ENCODE measurements at regions of chr12 and their contacts with region 1.

Region 1: DNA sequence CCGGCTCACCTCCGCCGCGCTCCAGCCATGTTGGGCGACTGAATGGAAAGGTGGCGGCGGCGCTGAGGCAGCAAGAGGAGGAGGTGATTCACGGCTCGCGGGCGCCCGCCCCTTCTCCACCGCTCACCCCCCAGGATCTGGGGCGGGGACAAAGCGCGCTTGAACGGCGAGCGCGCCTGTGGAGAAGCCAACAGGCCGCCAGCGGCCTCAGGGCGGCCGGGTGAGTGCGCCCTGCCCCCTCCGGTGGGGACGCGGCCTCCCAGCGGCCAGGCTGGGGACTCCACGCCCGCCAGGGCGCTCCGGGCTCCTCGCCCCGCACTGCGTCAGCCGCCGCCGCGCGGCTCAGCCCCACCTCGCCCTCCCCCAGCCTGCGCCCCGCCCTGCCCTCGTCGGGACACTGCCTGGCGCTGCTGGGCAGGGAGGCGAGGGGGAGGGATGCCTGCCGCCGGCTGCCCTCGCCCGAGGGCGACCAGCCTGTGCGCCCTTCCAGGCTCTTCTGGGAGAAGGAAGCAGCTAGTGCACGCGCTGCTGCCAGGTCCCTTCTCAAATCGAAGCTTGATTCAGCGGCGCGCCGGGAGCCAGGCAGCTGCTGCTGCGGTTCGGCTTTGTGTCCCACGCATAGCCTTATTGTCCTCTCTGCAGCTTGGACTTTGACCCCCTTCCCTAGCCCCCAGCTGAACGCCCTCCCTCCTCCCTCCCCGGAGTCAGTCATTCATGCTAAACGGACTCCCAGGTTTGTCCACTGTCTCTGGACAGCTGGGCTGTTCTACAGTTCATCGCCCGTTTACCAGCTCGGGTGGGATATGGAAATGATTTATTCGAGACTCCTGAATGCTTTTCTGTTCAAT is at the start of gene KIF21A:
- DNase-seq: peak; percentile 95
- H3K4me3 ChIP-seq: peak within 1 kb of the TSS; percentile 77 to 92 (median 80)
- H3K27ac ChIP-seq: peak within 1 kb of the TSS; percentile 77
- H3K4me1 ChIP-seq: peaks cover 19% of the 10 kb centered on the region
- H3K27me3 ChIP-seq: no peaks in the 10 kb centered on the region
- CTCF ChIP-seq: peak; percentile 35 to 66
- total RNA-seq, gene KIF21A: 43.0 to 45.3 TPM

Region 2: DNA sequence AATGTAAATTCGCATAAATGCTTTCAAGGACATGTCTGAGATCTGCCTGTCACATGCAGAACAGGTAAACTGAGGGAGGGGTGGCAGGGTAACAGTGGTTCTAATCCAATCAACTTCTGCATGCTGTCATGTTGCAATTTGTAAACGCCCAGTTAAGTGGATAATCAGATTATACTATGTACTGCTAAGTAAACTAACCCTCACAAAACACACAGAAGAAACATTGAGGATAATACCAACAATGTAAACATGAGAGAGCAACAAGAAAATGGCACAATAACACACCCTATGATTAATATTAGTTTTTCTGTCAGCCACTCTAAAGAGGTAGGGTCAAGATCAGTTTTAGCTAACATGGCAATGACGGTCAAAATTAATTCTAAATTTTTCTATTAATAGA is 124.1 kb before region 1 on chr12:
- CTCF ChIA-PET with region 1: no interaction called
- dilution Hi-C with region 1: no loop called
- in situ Hi-C with region 1: no loop called
- intact Hi-C with region 1: loop called (anchors 5 kb)
- DNase-seq: no peak
- H3K4me3 ChIP-seq: no peak overlapping the region
- H3K27ac ChIP-seq: no peak overlapping the region
- H3K4me1 ChIP-seq: no peaks in the 10 kb centered on the region
- H3K27me3 ChIP-seq: no peaks in the 10 kb centered on the region
- CTCF ChIP-seq: no peak

Region 3: DNA sequence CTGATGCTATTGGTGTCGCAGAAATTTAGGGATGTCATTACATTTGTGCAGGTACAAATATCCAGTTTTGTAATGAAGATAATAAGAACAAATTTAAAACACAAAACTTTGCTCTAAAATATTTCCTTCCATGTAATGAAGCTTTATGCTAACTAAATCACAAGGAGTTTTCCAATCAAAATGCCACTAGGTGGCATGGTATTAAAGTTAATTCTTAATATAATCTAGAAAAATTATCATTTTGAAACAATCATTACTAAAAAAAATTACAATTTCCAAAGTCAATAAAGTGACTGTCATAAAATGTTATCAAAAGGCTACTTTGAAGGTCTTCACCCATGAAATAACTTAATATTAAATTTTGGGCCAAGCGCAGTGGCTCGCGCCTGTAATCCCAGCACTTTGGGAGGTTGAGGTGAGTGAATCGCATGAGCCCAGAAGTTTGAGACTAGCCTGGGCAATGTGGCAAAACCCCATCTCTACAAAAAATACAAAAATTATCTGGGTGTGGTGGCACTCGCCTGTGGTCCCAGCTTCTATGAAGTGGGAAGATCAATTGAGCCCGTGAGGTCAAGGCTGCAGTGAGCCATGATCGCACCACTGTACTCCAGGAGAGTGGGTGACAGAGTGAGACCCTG is 77.8 kb before region 1 on chr12:
- CTCF ChIA-PET with region 1: interaction called, 3 read pairs
- dilution Hi-C with region 1: no loop called
- in situ Hi-C with region 1: no loop called
- intact Hi-C with region 1: loop called (anchors 1 kb)
- DNase-seq: no peak
- H3K4me3 ChIP-seq: no peak overlapping the region
- H3K27ac ChIP-seq: no peak overlapping the region
- H3K4me1 ChIP-seq: no peaks in the 10 kb centered on the region
- H3K27me3 ChIP-seq: no peaks in the 10 kb centered on the region
- CTCF ChIP-seq: peak in 1 of 2 donors; percentile 33

Region 4: DNA sequence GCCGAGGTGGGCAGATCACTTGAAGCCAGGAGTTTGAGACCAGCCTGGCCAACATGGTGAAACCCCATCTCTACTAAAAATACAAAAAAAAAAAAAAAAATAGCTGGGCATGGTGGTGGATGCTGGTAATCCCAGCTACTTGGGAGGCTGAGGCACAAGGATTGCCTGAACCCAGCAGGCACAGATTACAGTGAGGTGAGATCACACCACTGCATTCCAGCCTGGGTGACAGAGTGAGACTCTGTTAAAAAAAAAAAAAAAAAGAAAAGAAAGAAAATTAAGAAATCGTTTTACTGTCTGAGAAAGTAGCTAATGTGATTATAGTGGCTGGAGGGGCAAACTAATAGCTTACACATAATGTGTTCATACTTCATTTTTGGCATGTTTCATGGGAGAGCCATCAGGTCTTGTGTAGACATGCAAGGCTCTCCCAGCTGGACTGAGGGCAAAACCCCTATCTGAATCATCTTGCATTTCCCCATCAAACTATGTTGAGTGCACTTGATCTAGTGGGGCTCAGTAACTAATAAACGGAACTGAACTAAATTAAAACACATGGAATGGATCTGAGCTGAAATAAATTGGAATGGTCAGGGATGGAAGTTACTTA is 16.6 kb before region 1 on chr12:
- CTCF ChIA-PET with region 1: interaction called, 3 read pairs
- dilution Hi-C with region 1: no loop called
- in situ Hi-C with region 1: no loop called
- intact Hi-C with region 1: loop called (anchors 1 kb)
- DNase-seq: peak; percentile 98
- H3K4me3 ChIP-seq: no peak overlapping the region
- H3K27ac ChIP-seq: peak overlapping the region; percentile 70
- H3K4me1 ChIP-seq: peaks cover 16% of the 10 kb centered on the region
- H3K27me3 ChIP-seq: no peaks in the 10 kb centered on the region
- CTCF ChIP-seq: no peak

Region 5: GRCh38 chr12:39490500-39491276 is 47.4 kb after region 1 on chr12:
- CTCF ChIA-PET with region 1: no interaction called
- dilution Hi-C with region 1: no loop called
- in situ Hi-C with region 1: no loop called
- intact Hi-C with region 1: loop called (anchors 2 kb)
- DNase-seq: peak; percentile 93
- H3K4me3 ChIP-seq: no peak overlapping the region
- H3K27ac ChIP-seq: peak overlapping the region; percentile 19
- H3K4me1 ChIP-seq: peaks cover 7% of the 10 kb centered on the region
- H3K27me3 ChIP-seq: no peaks in the 10 kb centered on the region
- CTCF ChIP-seq: no peak

Region 6: DNA sequence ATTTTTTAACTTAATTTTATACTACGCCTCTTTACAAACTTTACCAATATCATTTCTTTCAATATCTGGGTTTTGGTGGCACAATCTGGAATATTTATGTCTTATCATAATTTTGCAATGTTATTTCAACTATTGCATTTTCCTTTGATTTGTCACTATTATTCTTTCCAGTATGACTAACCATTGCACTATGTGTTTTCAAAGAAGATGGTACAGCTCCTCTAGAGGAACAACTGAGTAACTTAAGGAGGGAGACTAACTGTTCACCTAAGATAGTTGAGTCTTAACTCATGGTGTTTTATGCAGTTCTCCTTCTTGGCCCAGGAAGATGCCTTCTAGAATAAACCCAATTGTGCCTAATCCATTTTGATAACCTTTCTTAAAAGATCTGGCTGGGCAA is 60.1 kb after region 1 on chr12:
- CTCF ChIA-PET with region 1: no interaction called
- dilution Hi-C with region 1: no loop called
- in situ Hi-C with region 1: no loop called
- intact Hi-C with region 1: loop called (anchors 1 kb)
- DNase-seq: peak; percentile 68
- H3K4me3 ChIP-seq: no peak overlapping the region
- H3K27ac ChIP-seq: no peak overlapping the region
- H3K4me1 ChIP-seq: peaks cover 19% of the 10 kb centered on the region
- H3K27me3 ChIP-seq: no peaks in the 10 kb centered on the region
- CTCF ChIP-seq: peak; percentile 55 to 62

Region 7: DNA sequence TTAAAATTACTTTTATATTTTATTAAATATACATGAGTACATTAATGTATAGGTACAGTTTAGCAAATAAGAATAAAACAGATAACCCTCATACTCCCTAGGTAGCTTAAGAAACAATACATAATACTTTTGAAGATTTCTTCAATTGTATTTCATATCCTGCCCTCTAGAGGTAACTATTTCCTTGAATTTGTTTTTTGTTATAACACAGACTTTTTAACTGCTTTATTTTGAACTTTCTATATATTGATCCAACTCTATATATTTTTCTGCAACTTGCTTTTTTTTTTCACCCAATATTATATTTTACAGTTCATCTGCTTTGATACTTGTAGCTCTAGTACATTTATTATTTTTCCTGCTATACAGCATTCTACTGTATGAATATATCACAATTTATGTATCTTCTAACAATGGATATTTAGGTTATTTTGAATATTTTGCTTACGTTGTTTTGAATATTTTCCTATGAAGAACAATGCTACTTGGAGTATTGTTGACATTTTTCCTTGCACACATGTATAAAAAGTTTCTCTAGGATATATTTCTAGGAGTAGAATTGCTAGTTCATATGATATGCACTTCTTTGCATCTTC is 249.1 kb after region 1 on chr12:
- CTCF ChIA-PET with region 1: no interaction called
- dilution Hi-C with region 1: no loop called
- in situ Hi-C with region 1: no loop called
- intact Hi-C with region 1: loop called (anchors 10 kb)
- DNase-seq: no peak
- H3K4me3 ChIP-seq: no peak overlapping the region
- H3K27ac ChIP-seq: no peak overlapping the region
- H3K4me1 ChIP-seq: no peaks in the 10 kb centered on the region
- H3K27me3 ChIP-seq: no peaks in the 10 kb centered on the region
- CTCF ChIP-seq: peak; percentile 28 to 34